Naive thymus-derived CD4-positive, alpha-beta T cell (primary cell): ENCODE measurements at regions of chr11 and their contacts with region 1.

Region 1: DNA sequence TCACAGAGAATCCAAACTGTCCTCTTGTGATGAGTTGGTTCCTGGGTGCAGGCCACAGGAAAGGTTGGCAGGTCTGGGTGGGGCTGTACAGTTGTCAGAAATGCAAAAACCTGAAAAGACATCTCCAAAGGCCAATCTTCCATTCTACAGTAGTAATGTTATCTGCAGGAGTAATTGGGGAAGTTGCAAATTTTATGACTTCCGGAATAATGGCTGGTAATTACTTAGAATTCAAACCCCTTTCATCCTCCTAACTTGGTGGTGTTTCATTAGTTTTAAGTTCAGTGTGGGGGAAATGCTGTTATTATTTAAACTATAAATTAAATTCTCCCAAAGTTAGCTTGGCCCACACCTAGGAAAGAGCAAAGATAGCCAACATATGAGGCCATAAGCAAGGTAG is 64.7 kb upstream of the FAT3 start:
- DNase-seq: no peak
- ATAC-seq: no peak
- H3K4me3 ChIP-seq: no peak overlapping the region
- H3K4me3 Mint-ChIP-seq: no peak overlapping the region
- H3K27ac ChIP-seq: no peak overlapping the region
- H3K27ac Mint-ChIP-seq: no peak overlapping the region
- H3K4me1 ChIP-seq: no peaks in the 10 kb centered on the region
- H3K4me1 Mint-ChIP-seq: no peaks in the 10 kb centered on the region
- H3K27me3 ChIP-seq: no peaks in the 10 kb centered on the region
- H3K27me3 Mint-ChIP-seq: no peaks in the 10 kb centered on the region

Region 2: GRCh38 chr11:91825777-91826176 is 334.2 kb before region 1 on chr11:
- CTCF ChIA-PET with region 1: no interaction called
- POLR2A ChIA-PET with region 1: no interaction called
- intact Hi-C with region 1: no loop called
- DNase-seq: no peak
- ATAC-seq: no peak
- H3K4me3 ChIP-seq: no peak overlapping the region
- H3K4me3 Mint-ChIP-seq: no peak overlapping the region
- H3K27ac ChIP-seq: no peak overlapping the region
- H3K27ac Mint-ChIP-seq: no peak overlapping the region
- H3K4me1 ChIP-seq: no peaks in the 10 kb centered on the region
- H3K4me1 Mint-ChIP-seq: no peaks in the 10 kb centered on the region
- H3K27me3 ChIP-seq: no peaks in the 10 kb centered on the region
- H3K27me3 Mint-ChIP-seq: no peaks in the 10 kb centered on the region

Region 3: GRCh38 chr11:92101920-92102319 is 58.0 kb before region 1 on chr11:
- CTCF ChIA-PET with region 1: no interaction called
- POLR2A ChIA-PET with region 1: no interaction called
- intact Hi-C with region 1: loop called in 1 of 2 experiments (anchors 10 kb)
- DNase-seq: no peak
- ATAC-seq: no peak
- H3K4me3 ChIP-seq: no peak overlapping the region
- H3K4me3 Mint-ChIP-seq: no peak overlapping the region
- H3K27ac ChIP-seq: no peak overlapping the region
- H3K27ac Mint-ChIP-seq: no peak overlapping the region
- H3K4me1 ChIP-seq: no peaks in the 10 kb centered on the region
- H3K4me1 Mint-ChIP-seq: no peaks in the 10 kb centered on the region
- H3K27me3 ChIP-seq: no peaks in the 10 kb centered on the region
- H3K27me3 Mint-ChIP-seq: no peaks in the 10 kb centered on the region